Mammary epithelial cell (primary cell): ENCODE measurements at regions of chr1 and their contacts with region 1.

Region 1: DNA sequence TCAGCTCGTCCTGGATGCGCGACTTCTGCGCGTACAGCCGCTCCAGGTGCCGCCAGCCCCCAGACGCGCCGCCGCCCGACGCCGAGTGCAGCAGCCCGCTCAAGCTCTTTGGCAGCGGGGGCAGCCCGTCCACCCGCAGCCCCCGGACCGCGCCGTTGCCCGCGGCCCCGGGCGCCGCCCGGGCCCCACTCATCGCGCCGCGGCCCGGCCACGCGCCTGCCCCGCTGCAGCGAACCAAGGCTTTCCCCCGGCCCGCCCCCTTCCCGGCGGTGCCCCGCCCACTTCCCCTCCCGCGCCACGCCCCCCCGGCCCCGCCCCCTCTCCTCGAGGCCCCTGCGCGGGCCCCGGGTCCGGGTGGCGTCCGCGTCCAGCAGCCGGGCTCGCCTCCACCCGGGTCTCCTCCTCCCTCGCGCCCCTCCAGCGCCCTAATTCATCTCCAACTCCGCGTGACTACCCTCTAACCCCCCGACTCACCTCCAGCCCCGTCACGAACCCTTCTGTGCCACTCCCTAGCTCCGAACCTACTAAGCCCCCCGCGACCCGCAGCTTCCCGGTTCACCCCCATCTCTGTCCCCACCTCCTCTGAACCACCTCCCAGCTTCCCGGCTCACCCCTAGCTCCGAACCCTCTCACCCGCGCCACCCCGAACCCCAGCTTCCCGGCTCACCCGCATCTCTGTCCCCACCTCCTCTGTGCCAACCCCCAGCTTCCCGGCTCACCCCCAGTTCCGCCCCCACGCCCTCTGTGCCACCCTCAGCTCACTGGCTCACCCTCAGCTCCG is at the start of gene FAM89A:
- DNase-seq: no peak
- H3K4me3 ChIP-seq: peak within 1 kb of the TSS; percentile 72 to 92 (median 86)
- H3K27ac ChIP-seq: no peak within 1 kb of the TSS
- H3K4me1 ChIP-seq: peaks cover 11% of the 10 kb centered on the region
- H3K27me3 ChIP-seq: peaks cover 2% of the 10 kb centered on the region
- CTCF ChIP-seq: no peak
- total RNA-seq, gene FAM89A: 4.7 to 16.7 TPM

Region 2: GRCh38 chr1:230922620-230923019 is 117.6 kb before region 1 on chr1:
- CTCF ChIA-PET with region 1: no interaction called
- dilution Hi-C with region 1: no loop called
- in situ Hi-C with region 1: no loop called
- intact Hi-C with region 1: loop called (anchors 10 kb)
- DNase-seq: no peak
- H3K4me3 ChIP-seq: no peak overlapping the region
- H3K27ac ChIP-seq: no peak overlapping the region
- H3K4me1 ChIP-seq: no peaks in the 10 kb centered on the region
- H3K27me3 ChIP-seq: no peaks in the 10 kb centered on the region
- CTCF ChIP-seq: peak in 1 of 2 donors; percentile 9

Region 3: GRCh38 chr1:231000639-231001038 is 39.6 kb before region 1 on chr1:
- CTCF ChIA-PET with region 1: no interaction called
- dilution Hi-C with region 1: no loop called
- in situ Hi-C with region 1: no loop called
- intact Hi-C with region 1: no loop called
- DNase-seq: no peak
- H3K4me3 ChIP-seq: no peak overlapping the region
- H3K27ac ChIP-seq: no peak overlapping the region
- H3K4me1 ChIP-seq: no peaks in the 10 kb centered on the region
- H3K27me3 ChIP-seq: no peaks in the 10 kb centered on the region
- CTCF ChIP-seq: no peak